MCF 10A (cell line): ENCODE measurements at regions of chr4 and their contacts with region 1.

Region 1: DNA sequence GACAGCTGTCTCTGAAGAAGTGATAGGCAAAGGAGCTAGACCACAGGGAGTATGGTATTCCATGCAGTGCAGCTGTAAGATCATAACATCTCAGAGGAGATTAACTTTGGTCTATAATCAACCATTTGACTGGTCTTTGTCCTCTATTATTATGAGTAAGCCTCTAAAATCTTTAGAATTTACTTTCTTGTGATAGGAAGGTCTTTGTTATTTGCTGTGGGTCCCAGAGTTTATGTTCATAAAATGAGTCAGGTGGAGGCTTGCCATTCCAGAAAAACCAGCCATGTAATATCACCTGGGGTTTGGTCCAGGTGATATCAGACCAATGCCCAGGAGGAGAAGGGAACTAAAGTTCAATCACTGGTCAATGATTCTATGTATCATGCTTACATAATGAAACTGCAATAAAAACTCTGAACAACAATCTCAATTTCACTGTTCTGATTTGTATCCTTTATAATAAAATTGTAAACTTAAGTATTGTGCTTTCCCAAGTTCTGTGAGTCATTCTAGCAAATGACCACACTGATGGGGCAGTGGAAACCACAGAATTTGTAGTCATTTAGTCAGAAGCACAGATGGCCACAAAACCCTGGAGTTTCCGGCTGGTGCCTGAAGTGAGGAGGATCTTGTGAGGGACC is 239.6 kb upstream of the TRAM1L1 start:
- DNase-seq: peak; percentile 26
- H3K4me3 Mint-ChIP-seq: no peak overlapping the region
- H3K27ac Mint-ChIP-seq: peak overlapping the region; percentile 20
- H3K4me1 Mint-ChIP-seq: peaks cover 6% of the 10 kb centered on the region
- H3K27me3 Mint-ChIP-seq: no peaks in the 10 kb centered on the region
- CTCF ChIP-seq: no peak

Region 2: GRCh38 chr4:116942315-116942714 is 382.7 kb before region 1 on chr4:
- CTCF ChIA-PET with region 1: no interaction called
- POLR2A ChIA-PET with region 1: no interaction called
- intact Hi-C with region 1: no loop called
- DNase-seq: no peak
- H3K4me3 Mint-ChIP-seq: no peak overlapping the region
- H3K27ac Mint-ChIP-seq: no peak overlapping the region
- H3K4me1 Mint-ChIP-seq: no peaks in the 10 kb centered on the region
- H3K27me3 Mint-ChIP-seq: no peaks in the 10 kb centered on the region
- CTCF ChIP-seq: no peak

Region 3: GRCh38 chr4:117302226-117302625 is 22.7 kb before region 1 on chr4:
- CTCF ChIA-PET with region 1: no interaction called
- POLR2A ChIA-PET with region 1: no interaction called
- intact Hi-C with region 1: no loop called
- DNase-seq: no peak
- H3K4me3 Mint-ChIP-seq: no peak overlapping the region
- H3K27ac Mint-ChIP-seq: no peak overlapping the region
- H3K4me1 Mint-ChIP-seq: no peaks in the 10 kb centered on the region
- H3K27me3 Mint-ChIP-seq: no peaks in the 10 kb centered on the region
- CTCF ChIP-seq: no peak

Region 4: GRCh38 chr4:117400039-117400835 is 75.3 kb after region 1 on chr4:
- CTCF ChIA-PET with region 1: no interaction called
- POLR2A ChIA-PET with region 1: no interaction called
- intact Hi-C with region 1: loop called (anchors 10 kb)
- DNase-seq: peak; percentile 61
- H3K4me3 Mint-ChIP-seq: peak overlapping the region; percentile 58
- H3K27ac Mint-ChIP-seq: peak overlapping the region; percentile 83
- H3K4me1 Mint-ChIP-seq: no peaks in the 10 kb centered on the region
- H3K27me3 Mint-ChIP-seq: no peaks in the 10 kb centered on the region
- CTCF ChIP-seq: no peak

Region 5: GRCh38 chr4:117447925-117448324 is 123.0 kb after region 1 on chr4:
- CTCF ChIA-PET with region 1: no interaction called
- POLR2A ChIA-PET with region 1: no interaction called
- intact Hi-C with region 1: no loop called
- DNase-seq: no peak
- H3K4me3 Mint-ChIP-seq: no peak overlapping the region
- H3K27ac Mint-ChIP-seq: no peak overlapping the region
- H3K4me1 Mint-ChIP-seq: no peaks in the 10 kb centered on the region
- H3K27me3 Mint-ChIP-seq: no peaks in the 10 kb centered on the region
- CTCF ChIP-seq: no peak